ENCODE measurements at regions of chr1 and their contacts with region 1.

Region 1: DNA sequence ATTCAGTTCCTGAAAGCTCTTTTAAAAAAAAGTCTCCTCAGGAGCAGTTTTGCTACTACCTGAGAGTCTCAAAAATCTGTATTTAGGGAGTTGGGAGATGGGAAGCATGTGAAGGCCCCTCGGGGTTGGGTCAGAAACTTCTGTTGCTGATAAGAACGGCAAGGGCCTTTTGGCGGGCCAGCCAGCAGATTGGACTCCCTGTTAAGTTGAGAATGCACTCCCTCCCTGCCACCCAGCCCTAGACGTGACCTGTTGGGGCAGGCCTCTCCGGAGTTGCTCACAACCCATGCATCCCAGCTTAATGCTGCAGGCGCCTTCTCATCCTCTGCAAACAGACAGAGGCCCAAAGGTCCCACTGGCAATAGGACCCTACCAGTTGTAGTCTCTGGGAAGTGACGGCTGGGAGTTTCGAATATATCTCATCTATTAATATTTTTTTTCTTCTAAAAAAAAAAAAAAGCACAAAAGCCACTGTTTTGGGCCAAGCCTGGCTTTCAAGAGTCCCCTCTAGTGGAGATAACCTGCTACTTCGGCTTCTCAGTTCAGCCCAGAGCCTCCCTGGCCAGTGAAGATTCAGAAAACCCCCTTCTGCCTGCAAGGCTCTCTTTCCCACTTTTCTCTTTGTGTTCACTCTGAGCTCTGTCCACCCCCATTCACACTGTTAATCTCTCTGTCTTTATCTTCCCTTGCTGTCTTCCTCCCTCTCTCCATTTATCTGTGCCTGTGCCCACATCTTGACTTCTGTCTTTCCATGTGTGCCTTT is 5.3 kb downstream of the PLXNA2 start:
- DNase-seq: peak; percentile 74
- H3K4me3 ChIP-seq: peak overlapping the region in 1 of 2 experiments; percentile 20; a peak in 1 of 4 replicates
- H3K27ac ChIP-seq: peak overlapping the region; percentile 30 to 42; a peak in 3 of 4 replicates
- H3K4me1 ChIP-seq: peaks cover 30 to 64% of the 10 kb centered on the region in 2 experiments; a peak in 3 of 4 replicates
- H3K27me3 ChIP-seq: no peaks in the 10 kb centered on the region
- CTCF ChIP-seq: peak; percentile 84
- EP300 ChIP-seq: no peak
- RAD21 ChIP-seq: peak; percentile 80

Region 2: DNA sequence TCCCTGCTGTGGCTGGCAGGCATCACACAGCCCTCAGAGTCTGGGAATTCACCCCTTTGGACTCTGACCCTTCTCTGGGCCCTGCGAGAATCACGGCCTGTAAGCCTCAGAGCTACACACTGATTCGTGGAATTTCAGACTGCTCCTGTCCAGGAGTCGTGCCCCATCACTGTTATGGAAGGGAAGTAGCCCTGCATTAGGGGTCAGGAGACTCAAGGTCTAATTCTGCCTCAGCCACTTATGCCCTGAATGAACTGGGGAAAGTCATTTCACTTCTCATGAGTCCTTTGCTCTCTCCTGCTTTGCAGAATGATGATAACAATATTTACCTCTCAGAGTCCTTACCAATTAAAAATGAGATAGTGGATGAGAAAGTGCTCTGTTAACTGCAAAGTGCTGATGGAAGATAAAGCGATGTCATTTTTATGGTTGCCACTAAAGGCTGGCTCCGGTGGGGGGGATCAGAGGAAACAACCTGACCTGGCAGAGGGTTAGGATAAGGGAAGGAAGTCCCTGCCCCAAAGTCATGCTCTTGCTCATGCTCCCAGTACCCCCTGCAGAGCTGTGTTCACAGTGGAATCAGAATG is 179.4 kb before region 1 on chr1:
- CTCF ChIA-PET with region 1: interaction called, 15 read pairs
- POLR2A ChIA-PET with region 1: no interaction called
- DNase-seq: peak; percentile 83
- H3K4me3 ChIP-seq: no peak overlapping the region
- H3K27ac ChIP-seq: peak overlapping the region; percentile 28 to 98; a peak in 3 of 4 replicates
- H3K4me1 ChIP-seq: peaks cover 20 to 50% of the 10 kb centered on the region in 2 experiments
- H3K27me3 ChIP-seq: no peaks in the 10 kb centered on the region
- CTCF ChIP-seq: no peak
- EP300 ChIP-seq: peak in 1 of 2 experiments; percentile 98; a peak in 2 of 4 replicates
- RAD21 ChIP-seq: no peak; the same call in none of the 2 replicates

Region 3: DNA sequence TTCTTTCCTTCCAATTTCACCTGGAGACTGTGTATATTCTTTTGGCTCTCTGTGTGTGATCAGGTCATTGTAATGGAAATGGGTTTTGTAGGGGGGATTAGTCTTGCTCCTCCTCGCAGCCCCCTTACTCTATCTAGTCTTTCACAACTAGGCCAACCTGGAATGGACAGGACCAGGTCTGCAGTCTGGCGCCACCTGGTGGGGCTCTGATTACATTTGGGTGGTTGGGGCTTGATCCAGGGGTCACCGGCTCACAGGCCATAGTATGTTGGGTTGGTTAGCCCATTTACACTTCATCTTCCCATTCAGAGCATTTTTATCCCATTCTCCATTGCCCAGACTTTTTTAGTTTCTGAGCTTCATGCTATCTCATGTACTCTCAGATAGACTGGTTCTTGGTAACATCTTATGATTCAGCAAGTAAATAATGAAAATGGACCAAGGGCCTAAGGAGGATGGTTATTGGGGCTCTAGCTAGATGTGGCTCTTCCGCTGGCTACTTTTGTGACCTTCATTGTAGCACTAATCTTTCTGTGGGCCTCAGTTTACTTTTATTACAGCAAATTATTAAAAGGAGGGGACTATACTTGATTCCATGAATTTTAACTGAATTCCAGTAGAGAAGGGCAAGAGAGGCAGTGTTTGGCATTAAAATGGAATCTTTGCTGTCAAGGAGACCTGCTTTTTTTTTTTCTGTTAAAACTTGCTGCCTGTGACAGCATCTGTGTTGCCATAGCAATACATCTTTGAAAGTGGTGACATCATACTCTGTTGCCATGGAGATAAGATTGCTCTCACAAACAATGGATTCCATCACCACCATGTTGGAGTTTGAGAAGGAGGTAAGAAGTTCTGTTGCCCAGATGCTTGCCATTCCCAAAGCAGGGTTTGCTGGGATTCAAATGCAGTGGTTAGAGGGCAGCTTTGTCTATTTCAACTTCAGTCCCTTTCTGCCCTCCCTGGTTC is 144.9 kb before region 1 on chr1:
- CTCF ChIA-PET with region 1: interaction called, 84 read pairs
- POLR2A ChIA-PET with region 1: no interaction called
- DNase-seq: peak; percentile 67
- H3K4me3 ChIP-seq: peak overlapping the region in 1 of 2 experiments; percentile 8; a peak in 1 of 4 replicates
- H3K27ac ChIP-seq: peak overlapping the region in 1 of 2 experiments; percentile 71; a peak in 2 of 4 replicates
- H3K4me1 ChIP-seq: peaks cover 1 to 24% of the 10 kb centered on the region in 2 experiments; a peak in 2 of 4 replicates
- H3K27me3 ChIP-seq: no peaks in the 10 kb centered on the region
- CTCF ChIP-seq: peak; percentile 88
- EP300 ChIP-seq: no peak
- RAD21 ChIP-seq: peak; percentile 83

Region 4: DNA sequence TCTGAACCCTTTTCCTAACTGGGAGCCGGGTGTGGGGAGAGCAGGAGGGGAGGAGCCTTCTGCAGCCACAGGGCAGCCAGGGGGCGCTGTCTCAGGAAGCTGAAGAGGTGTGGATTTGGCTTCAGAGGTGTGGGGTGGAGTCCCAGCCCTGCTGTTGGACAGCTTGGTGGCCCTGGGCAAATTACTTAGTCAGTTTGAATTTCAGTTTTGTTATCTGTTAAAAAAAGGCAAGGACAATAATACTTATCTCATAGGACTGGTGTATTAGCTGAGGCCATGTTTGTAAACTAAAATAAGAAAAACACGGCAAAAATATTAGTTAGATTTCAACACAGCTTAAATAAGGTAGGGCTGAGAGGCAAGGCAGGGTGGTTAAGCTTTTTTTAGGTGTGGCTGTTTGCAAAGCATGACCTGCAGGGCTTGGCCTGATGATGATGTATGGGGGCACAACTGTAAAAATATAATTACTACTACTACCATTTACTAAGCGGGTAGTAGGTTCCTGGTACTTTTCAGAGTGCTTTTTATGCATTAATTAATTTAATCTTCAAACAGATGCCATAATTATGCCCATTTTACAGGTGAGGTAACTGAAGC is 106.5 kb before region 1 on chr1:
- CTCF ChIA-PET with region 1: interaction called, 95 read pairs
- POLR2A ChIA-PET with region 1: no interaction called
- DNase-seq: peak; percentile 72
- H3K4me3 ChIP-seq: no peak overlapping the region; a peak in 1 of 4 replicates
- H3K27ac ChIP-seq: no peak overlapping the region
- H3K4me1 ChIP-seq: peaks cover 9 to 46% of the 10 kb centered on the region in 2 experiments; a peak in 2 of 4 replicates
- H3K27me3 ChIP-seq: no peaks in the 10 kb centered on the region
- CTCF ChIP-seq: peak; percentile 94
- EP300 ChIP-seq: no peak
- RAD21 ChIP-seq: peak; percentile 61

Region 5: DNA sequence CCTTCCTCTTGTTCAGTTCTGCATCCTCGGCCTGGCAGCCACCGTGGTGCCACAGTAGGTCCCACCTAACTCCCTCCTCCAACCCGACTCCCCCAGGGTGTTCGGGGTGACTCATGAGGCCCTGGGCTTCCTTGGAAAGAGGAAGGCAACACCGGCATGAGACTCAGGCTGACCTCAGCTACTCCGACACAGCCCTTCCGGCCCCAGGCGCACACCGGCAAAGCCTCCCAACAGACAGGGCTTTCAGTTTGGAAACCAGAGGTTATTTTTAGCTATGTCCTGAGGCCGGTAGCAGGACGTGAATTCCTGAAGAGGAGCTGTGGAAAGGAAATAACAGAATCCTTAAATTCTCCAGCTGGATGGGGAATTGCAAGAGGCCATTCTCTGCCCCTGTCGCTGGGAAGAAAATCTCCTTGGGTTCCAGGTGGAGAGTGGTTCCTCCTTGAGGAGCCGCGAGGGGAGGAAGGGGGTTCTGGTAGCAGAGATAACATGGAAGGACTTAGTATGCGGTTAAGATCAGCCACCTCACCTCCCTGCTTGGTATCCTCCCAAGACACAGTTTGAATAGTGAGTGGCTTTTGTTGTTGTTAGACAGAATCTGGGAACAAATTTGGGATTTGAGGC is 19.1 kb before region 1 on chr1:
- CTCF ChIA-PET with region 1: interaction called, 12 read pairs
- POLR2A ChIA-PET with region 1: no interaction called
- DNase-seq: no peak
- H3K4me3 ChIP-seq: no peak overlapping the region
- H3K27ac ChIP-seq: peak overlapping the region; percentile 79 to 86
- H3K4me1 ChIP-seq: peaks cover 19 to 61% of the 10 kb centered on the region in 2 experiments
- H3K27me3 ChIP-seq: no peaks in the 10 kb centered on the region
- CTCF ChIP-seq: no peak
- EP300 ChIP-seq: peak in 1 of 2 experiments; percentile 49; a peak in 1 of 4 replicates
- RAD21 ChIP-seq: no peak

Region 6: DNA sequence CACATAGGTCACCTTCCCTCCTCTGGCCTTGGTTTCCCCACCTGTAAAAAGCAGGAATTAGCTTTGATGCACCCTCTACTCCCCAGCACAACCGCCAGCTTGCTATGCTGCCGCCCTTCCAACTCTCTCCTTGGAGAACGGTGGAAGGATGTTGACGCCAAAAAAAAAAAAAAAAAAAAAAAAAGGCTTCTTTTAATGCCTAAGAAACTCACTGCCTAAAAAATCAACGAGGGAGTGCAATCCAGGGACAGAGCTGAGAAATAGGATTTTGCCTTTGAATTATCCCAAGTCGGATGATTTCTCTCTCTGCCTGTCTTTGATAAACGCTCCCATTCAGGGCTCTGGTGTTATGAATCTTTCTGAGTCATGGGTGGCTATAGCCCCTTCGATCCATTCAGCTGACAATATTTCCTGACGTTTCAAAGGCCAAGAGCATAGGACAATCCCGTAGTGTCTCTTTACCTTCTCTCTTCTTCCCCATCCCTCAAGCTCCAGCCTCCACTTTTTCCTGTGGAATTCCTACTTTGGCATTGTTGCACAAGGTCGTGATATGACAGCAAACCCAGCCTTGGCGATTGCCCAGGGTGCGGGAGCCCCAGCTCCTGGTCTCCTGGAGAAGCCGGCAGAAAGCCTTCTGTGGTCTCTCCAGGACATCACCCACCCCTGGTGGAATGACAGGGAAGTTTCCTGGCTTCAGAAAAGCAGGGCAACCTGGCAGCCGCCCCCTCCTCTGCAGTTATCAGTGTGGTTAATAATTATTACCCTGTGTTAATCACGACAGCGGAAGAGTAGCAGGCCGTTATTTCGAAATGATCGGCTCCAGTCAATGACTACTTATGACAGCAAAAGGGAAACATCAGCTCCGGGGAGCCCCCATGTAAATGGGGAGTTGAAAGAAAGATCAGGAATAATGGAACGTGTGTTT is 13.3 kb after region 1 on chr1:
- CTCF ChIA-PET with region 1: interaction called, 11 read pairs
- POLR2A ChIA-PET with region 1: interaction called, 3 read pairs
- DNase-seq: peak; percentile 67
- H3K4me3 ChIP-seq: no peak overlapping the region
- H3K27ac ChIP-seq: no peak overlapping the region
- H3K4me1 ChIP-seq: peaks cover 0 to 19% of the 10 kb centered on the region in 2 experiments; a peak in 2 of 4 replicates
- H3K27me3 ChIP-seq: no peaks in the 10 kb centered on the region
- CTCF ChIP-seq: peak; percentile 53
- EP300 ChIP-seq: no peak
- RAD21 ChIP-seq: peak; percentile 49

Measured in SK-N-SH (cell line).